ENCODE measurements at regions of chr1 and their contacts with region 1.

Region 1: GRCh38 chr1:199243423-199244061 is 604.7 kb downstream of the PTPRC start:
- DNase-seq: peak; percentile 58
- H3K4me3 ChIP-seq: no peak overlapping the region
- H3K27ac ChIP-seq: no peak overlapping the region
- H3K4me1 ChIP-seq: no peaks in the 10 kb centered on the region
- H3K27me3 ChIP-seq: no peaks in the 10 kb centered on the region
- CTCF ChIP-seq: peak; percentile 67 to 87
- POLR2A ChIP-seq: no peak

Region 2: GRCh38 chr1:198756470-198756869 is 487.1 kb before region 1 on chr1:
- CTCF ChIA-PET with region 1: interaction called, 13 read pairs
- POLR2A ChIA-PET with region 1: no interaction called
- dilution Hi-C with region 1: no loop called
- intact Hi-C with region 1: no loop called
- DNase-seq: peak; percentile 27
- H3K4me3 ChIP-seq: no peak overlapping the region
- H3K27ac ChIP-seq: no peak overlapping the region
- H3K4me1 ChIP-seq: no peaks in the 10 kb centered on the region
- H3K27me3 ChIP-seq: no peaks in the 10 kb centered on the region
- CTCF ChIP-seq: no peak
- POLR2A ChIP-seq: no peak

Region 3: DNA sequence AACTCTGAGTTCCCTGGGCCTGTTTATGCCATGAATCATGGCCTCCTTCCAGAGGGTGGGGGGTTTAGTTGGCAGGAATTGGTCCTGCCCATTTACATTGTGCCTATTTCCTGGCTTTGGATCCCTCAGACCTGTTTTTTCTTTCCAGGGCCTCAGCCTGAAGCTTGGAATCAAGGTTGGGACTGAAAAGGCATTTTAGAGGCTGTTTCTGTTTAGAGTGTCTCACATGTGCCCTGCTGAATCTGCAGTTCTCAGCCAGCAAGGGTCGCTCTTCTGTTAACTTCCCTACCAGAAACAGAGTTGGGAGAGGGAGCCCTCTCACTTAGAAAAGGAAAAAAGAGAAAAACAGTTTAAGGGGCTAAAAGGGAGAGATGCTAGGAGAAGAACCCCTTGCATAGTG is 413.6 kb before region 1 on chr1:
- CTCF ChIA-PET with region 1: no interaction called
- POLR2A ChIA-PET with region 1: no interaction called
- dilution Hi-C with region 1: no loop called
- intact Hi-C with region 1: loop called (anchors 5 kb)
- DNase-seq: peak; percentile 66
- H3K4me3 ChIP-seq: no peak overlapping the region
- H3K27ac ChIP-seq: no peak overlapping the region
- H3K4me1 ChIP-seq: peaks cover 13% of the 10 kb centered on the region
- H3K27me3 ChIP-seq: no peaks in the 10 kb centered on the region
- CTCF ChIP-seq: peak in 1 of 2 donors; percentile 25
- POLR2A ChIP-seq: no peak

Region 4: DNA sequence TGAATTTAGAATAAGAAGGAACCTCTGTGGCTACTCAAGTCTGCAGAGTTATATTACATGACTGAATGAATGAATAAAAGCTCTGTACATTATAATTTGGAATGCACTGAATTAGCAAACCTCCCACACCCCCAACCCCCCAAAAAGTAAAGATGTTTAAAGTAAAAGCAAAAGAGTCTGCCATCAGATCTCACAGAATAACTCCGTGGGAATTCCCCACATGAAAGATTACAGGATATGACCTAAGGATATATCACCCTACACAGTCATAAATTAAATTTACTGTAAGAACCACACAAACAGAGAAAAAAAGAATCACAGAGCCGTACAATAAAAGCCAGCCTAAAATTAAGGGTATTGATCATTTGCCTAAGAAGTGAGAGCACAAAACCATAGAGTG is 17.4 kb before region 1 on chr1:
- CTCF ChIA-PET with region 1: interaction called, 10 read pairs
- POLR2A ChIA-PET with region 1: no interaction called
- dilution Hi-C with region 1: no loop called
- intact Hi-C with region 1: no loop called
- DNase-seq: peak; percentile 74
- H3K4me3 ChIP-seq: no peak overlapping the region
- H3K27ac ChIP-seq: peak overlapping the region; percentile 57
- H3K4me1 ChIP-seq: peaks cover 15% of the 10 kb centered on the region
- H3K27me3 ChIP-seq: no peaks in the 10 kb centered on the region
- CTCF ChIP-seq: no peak
- POLR2A ChIP-seq: no peak

Region 5: GRCh38 chr1:199279872-199280645 is 36.5 kb after region 1 on chr1:
- CTCF ChIA-PET with region 1: no interaction called
- POLR2A ChIA-PET with region 1: no interaction called
- dilution Hi-C with region 1: no loop called
- intact Hi-C with region 1: no loop called
- DNase-seq: no peak
- H3K4me3 ChIP-seq: no peak overlapping the region
- H3K27ac ChIP-seq: no peak overlapping the region
- H3K4me1 ChIP-seq: peaks cover 4% of the 10 kb centered on the region
- H3K27me3 ChIP-seq: no peaks in the 10 kb centered on the region
- CTCF ChIP-seq: no peak
- POLR2A ChIP-seq: no peak

Region 6: DNA sequence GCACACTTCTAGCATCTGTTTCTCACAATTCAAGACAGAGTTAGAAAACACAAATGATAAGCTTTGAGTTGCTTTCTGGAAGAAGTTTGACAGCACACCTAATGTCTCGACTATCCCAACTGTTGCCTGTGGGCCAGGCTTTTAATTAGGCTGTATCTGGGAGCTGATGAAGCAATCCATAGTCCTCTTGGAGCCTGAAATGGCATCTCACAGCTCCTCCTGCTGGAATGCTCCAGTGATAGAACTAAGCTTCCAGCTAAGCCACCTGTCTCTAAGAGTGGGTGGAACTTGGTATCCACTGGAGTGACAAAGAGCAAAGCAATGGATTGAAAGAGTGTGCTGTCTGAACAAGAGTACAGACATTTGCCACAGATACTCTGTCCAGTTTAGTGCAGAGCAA is 178.7 kb after region 1 on chr1:
- CTCF ChIA-PET with region 1: interaction called, 11 read pairs
- POLR2A ChIA-PET with region 1: no interaction called
- dilution Hi-C with region 1: no loop called
- intact Hi-C with region 1: no loop called
- DNase-seq: peak; percentile 53
- H3K4me3 ChIP-seq: no peak overlapping the region
- H3K27ac ChIP-seq: no peak overlapping the region
- H3K4me1 ChIP-seq: no peaks in the 10 kb centered on the region
- H3K27me3 ChIP-seq: no peaks in the 10 kb centered on the region
- CTCF ChIP-seq: peak in 1 of 2 donors; percentile 47
- POLR2A ChIP-seq: no peak

Region 7: GRCh38 chr1:199490804-199491527 is 247.4 kb after region 1 on chr1:
- CTCF ChIA-PET with region 1: no interaction called
- POLR2A ChIA-PET with region 1: no interaction called
- dilution Hi-C with region 1: no loop called
- intact Hi-C with region 1: no loop called
- DNase-seq: no peak
- H3K4me3 ChIP-seq: no peak overlapping the region
- H3K27ac ChIP-seq: no peak overlapping the region
- H3K4me1 ChIP-seq: no peaks in the 10 kb centered on the region
- H3K27me3 ChIP-seq: peaks cover 0 to 3% of the 10 kb centered on the region in 2 experiments
- CTCF ChIP-seq: no peak
- POLR2A ChIP-seq: no peak

Region 8: DNA sequence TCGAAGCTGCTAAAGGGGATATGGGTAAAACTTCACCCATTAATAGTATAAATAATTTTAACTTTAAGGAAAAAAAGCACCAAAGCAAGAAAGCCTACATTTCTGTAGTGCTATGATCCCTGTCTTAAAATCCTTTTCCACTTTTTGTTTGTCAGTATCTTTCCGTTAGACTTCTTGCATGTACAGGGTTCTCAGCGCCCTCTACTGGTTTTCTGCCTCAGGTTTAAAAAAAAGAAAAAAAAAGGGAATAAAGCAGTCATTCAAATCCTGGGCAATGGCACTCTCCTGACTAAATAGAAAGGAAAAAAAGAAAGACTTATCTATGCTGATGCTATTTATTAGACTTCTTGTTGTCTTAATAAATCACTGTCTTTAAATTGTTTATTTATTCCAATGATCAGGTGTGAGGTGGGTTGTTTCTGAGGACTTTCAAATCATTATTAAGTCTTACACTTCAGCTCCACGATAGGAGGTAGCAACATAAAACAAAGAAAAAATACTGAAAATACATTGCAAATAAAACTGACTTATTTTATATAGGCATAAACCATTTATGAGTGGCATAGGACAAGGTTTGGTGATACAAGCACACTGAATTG is 308.5 kb after region 1 on chr1:
- CTCF ChIA-PET with region 1: no interaction called
- POLR2A ChIA-PET with region 1: no interaction called
- dilution Hi-C with region 1: no loop called
- intact Hi-C with region 1: loop called (anchors 10 kb)
- DNase-seq: peak; percentile 77
- H3K4me3 ChIP-seq: no peak overlapping the region
- H3K27ac ChIP-seq: no peak overlapping the region
- H3K4me1 ChIP-seq: no peaks in the 10 kb centered on the region
- H3K27me3 ChIP-seq: no peaks in the 10 kb centered on the region
- CTCF ChIP-seq: peak; percentile 46 to 65
- POLR2A ChIP-seq: no peak